ENCODE measurements at regions of chr11 and their contacts with region 1.

Region 1: GRCh38 chr11:64864473-64865285 is 13.7 kb downstream of the EHD1 start:
- DNase-seq: peak; percentile 57
- ATAC-seq: peak; percentile 5
- H3K4me3 Mint-ChIP-seq: peak overlapping the region; percentile 63
- H3K27ac Mint-ChIP-seq: peak overlapping the region; percentile 94
- H3K4me1 Mint-ChIP-seq: peaks cover 94% of the 10 kb centered on the region
- H3K27me3 Mint-ChIP-seq: no peaks in the 10 kb centered on the region

Region 2: DNA sequence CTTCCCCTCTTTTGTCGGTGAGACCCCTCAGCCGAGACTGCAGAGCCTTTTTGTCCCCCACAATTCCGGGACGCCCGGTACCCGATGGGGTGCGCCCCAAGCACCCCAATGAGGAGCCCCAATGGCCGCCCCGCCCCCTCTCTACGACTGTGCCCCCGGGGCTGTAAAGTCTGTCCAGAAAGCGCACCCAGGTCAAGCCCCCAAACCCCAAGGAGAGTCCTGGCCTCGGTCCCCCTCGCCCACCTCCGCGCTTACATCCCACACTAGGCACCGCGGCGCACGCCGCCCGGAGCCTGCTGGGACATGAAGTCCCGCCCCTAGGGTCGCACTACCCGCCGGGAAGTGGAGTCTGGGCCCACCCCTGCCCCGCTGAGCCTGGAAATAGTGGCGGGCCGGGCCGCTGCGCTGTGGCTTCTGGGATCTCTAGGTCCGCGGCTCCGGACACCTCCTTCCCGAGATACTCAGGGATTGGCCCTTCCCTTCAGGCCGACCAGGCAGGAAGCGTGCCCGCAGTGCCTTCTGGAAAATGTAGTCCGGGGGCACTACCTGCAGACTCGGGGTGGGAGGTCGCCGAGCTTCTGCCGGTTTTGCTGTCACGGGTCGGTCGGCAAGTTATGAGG is 54.3 kb before region 1 on chr11 and contains the start of gene MEN1:
- CTCF ChIA-PET with region 1: no interaction called
- POLR2A ChIA-PET with region 1: no interaction called
- DNase-seq: peak; percentile 88
- ATAC-seq: peak; percentile 93
- H3K4me3 Mint-ChIP-seq: peak within 1 kb of the TSS; percentile 98
- H3K27ac Mint-ChIP-seq: peak within 1 kb of the TSS; percentile 88
- H3K4me1 Mint-ChIP-seq: peaks cover 31% of the 10 kb centered on the region
- H3K27me3 Mint-ChIP-seq: no peaks in the 10 kb centered on the region
- total RNA-seq, gene MEN1: 32.9 to 34.0 TPM

Region 3: GRCh38 chr11:64878494-64879243 is 14.0 kb after region 1 on chr11 and contains the start of gene EHD1:
- CTCF ChIA-PET with region 1: interaction called, 211 read pairs
- POLR2A ChIA-PET with region 1: interaction called, 469 read pairs
- DNase-seq: peak; percentile 100
- ATAC-seq: peak; percentile 81
- H3K4me3 Mint-ChIP-seq: peak within 1 kb of the TSS; percentile 98
- H3K27ac Mint-ChIP-seq: peak within 1 kb of the TSS; percentile 92
- H3K4me1 Mint-ChIP-seq: peaks cover 62% of the 10 kb centered on the region
- H3K27me3 Mint-ChIP-seq: no peaks in the 10 kb centered on the region
- total RNA-seq, gene EHD1: 145 to 150 TPM

Region 4: GRCh38 chr11:64887757-64888405 is 23.2 kb after region 1 on chr11:
- CTCF ChIA-PET with region 1: interaction called, 491 read pairs
- POLR2A ChIA-PET with region 1: interaction called, 469 read pairs
- DNase-seq: peak; percentile 88
- ATAC-seq: peak; percentile 91
- H3K4me3 Mint-ChIP-seq: peak overlapping the region; percentile 52
- H3K27ac Mint-ChIP-seq: peak overlapping the region; percentile 81
- H3K4me1 Mint-ChIP-seq: peaks cover 43% of the 10 kb centered on the region
- H3K27me3 Mint-ChIP-seq: no peaks in the 10 kb centered on the region

Measured in activated CD8-positive, alpha-beta T cell treated with anti-CD3 and anti-CD28 coated beads, Interleukin-2, amount 10 ng/mL, durations not matched to agents 7 days and 5 days (primary cell).